ENCODE measurements at regions of chr20 and their contacts with region 1.

Region 1: DNA sequence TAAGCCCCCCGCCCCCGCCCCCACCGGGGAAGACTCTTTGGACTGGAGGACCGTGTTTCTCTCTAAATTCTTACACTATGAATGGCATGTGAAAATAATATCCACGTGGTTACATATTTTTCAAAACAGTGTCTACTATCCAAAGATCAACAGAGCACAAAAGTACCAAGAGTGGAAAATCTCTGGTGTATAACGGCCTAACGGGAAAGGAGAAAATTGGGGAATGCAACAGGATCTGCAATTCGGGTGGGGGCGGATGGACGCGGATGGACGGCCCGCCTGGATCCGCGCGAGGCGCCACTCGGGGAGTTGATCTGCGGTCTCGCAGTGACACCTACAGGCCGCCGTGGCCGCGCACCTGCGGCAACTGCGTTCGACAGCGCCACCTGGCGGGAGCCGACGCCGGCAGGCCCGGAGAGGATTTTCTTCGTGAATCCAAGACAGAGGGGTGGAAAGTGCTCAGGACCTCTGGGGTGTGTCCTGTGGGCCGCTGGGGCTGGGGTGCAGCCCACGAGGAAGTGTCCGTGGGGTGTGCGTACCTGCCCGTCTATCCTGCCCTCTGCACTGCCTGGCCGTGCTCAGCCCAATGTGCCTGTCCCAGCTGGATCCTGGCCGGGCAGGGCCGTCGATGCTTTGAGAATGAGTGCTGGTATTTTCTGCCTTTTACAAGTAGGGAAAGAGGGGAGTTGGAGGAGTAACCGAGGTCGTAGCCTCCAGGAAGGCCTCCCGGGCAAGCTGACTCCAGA is 18.6 kb downstream of the ANKRD60 start:
- DNase-seq: peak; percentile 72 to 98 (median 84)

Region 2: DNA sequence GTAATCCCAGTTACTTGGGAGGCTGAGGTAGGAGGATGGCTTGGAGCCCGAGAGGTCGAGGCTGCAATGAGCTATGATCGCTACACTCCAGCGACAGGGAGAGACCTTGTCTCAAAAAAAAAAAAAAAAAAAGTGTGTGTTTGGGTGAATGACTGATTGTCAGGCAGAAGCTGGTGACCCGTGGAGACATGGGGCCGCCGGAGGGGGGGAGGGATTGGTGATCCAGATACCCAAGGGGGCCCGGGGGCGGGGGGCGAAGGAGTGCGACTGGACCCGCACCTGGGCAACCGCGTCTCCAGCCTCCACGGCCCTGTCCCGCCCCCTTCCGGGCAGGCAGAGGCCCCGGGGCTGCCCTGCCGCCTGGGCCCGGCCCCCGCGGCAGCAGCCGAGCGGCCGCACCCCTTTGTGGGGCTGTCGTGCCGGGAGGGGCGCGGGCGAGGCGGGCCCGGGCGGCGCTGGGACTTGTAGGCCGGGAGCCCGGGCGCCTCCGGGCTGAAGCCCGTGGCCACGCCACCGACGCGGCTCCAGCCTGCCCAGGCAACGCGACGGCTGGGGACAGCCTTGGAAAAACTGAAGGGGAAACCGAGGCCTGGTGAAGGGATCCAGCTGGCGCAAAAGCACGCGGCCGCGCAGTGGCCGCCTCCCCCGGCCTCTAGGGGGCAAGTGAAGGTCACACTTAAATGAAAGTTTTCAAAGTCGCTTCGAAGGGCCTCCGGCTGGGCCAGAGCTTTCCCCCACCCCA is 820.7 kb before region 1 on chr20:
- intact Hi-C with region 1: loop called (anchors 10 kb)
- DNase-seq: peak in 7 of 10 donors; percentile 50 to 96 (median 76)

Region 3: DNA sequence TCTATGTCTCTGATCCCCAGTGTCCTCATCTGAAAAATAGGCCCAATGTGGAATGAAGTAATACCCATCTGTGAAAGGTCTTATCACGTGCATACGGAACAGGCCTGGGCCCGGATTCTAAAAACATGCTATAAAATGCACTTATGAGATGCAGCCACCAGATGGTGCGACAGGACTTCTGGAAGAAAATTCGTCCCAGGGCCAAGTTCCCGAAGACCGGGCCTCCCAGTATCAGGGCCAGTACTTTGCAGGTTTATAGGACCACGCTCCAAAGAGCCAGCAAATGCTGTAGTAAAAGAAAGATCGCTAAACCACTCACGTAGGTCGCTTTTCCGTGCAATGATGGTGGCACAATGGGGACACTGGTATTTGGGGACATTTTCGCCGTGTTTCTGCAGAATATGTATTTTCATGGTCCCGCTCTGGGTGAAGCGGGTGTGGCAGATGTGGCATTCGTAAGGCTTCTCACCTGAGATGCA is 695.5 kb before region 1 on chr20:
- intact Hi-C with region 1: loop called (anchors 1 kb)
- DNase-seq: peak in 9 of 10 donors; percentile 41 to 93 (median 68)

Region 4: DNA sequence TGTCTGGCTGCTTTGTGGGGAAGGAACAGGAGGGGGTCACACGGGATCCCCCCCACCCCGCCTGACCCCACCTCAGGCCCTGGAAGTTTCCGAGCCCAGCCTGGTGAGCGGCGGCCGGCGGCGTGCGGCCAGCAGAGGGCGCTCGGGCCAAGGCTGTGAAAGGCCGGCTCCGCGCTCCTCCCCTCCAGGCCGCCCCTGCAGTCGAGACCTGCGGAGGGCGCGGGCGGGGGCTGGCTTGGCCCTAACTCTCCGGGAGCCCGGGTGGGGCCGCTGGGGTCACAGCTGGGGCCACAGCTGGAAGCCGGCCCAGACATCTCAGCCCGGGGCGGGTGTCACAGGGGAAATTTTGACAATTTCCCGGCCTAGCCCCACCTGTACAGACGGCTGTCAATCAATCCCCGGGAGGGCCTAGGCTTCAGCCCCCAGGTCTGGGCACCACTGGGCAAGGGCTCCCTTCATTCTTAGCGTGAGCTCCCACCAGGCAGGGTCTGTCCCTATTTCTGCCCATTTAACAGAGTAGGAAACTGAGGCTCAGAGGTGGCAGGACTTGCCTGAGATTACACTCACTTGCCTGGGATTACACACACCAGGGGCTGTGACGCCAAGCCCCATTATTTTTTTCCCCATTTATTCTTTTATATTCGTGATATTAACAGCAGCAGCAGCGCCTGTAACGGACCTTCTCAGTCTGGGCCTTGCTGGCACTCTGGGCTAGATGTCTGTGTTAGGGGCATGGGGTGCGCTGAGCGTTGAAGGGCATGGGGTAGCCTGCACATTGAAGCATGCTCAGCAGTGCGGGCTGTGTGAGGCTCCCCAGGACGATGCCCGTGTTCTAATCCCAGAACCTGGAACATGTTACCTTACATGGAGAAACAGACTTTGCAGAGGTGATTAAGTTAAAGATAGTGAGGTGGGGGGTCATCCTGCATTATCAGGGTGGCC is 612.6 kb before region 1 on chr20:
- intact Hi-C with region 1: loop called (anchors 1 kb)
- DNase-seq: peak; percentile 27 to 95 (median 68)

Region 5: GRCh38 chr20:57879779-57880570 is 329.9 kb before region 1 on chr20:
- intact Hi-C with region 1: no loop called
- DNase-seq: no peak

Region 6: DNA sequence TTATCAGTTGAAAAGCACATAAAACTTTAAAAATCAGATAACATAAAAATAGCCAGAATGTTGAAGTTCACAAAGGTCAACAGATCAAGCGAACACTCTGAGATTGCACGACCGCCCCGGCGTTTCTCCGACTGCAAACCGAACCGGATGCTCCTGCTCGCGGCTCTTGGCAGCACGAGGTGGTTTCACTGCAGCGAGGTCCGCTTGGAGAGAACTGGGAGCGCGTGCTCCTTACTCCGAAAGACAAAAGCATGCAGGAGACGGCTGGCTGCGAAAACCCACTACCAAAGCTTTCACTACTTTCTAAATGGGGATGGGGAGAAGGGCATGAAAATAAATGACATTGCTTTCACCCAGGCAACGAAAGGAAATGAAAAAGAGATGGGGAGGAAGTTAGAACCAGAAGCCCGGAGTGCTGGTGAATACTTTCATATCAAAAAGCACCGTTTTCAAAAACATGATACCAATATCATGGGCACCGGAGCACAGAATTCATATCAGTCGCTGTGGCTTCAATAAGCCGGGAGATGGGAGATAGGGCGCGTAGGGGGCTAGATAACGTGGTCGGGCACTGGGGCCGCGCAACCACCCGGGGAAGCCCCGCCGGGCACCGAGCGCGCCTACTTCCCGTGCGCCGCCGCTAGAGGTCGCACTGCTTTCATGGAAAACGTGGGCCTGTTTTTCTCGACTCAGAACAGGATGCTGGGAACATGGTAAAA is 26.9 kb after region 1 on chr20:
- intact Hi-C with region 1: no loop called
- DNase-seq: peak; percentile 53 to 96 (median 83)

Region 7: DNA sequence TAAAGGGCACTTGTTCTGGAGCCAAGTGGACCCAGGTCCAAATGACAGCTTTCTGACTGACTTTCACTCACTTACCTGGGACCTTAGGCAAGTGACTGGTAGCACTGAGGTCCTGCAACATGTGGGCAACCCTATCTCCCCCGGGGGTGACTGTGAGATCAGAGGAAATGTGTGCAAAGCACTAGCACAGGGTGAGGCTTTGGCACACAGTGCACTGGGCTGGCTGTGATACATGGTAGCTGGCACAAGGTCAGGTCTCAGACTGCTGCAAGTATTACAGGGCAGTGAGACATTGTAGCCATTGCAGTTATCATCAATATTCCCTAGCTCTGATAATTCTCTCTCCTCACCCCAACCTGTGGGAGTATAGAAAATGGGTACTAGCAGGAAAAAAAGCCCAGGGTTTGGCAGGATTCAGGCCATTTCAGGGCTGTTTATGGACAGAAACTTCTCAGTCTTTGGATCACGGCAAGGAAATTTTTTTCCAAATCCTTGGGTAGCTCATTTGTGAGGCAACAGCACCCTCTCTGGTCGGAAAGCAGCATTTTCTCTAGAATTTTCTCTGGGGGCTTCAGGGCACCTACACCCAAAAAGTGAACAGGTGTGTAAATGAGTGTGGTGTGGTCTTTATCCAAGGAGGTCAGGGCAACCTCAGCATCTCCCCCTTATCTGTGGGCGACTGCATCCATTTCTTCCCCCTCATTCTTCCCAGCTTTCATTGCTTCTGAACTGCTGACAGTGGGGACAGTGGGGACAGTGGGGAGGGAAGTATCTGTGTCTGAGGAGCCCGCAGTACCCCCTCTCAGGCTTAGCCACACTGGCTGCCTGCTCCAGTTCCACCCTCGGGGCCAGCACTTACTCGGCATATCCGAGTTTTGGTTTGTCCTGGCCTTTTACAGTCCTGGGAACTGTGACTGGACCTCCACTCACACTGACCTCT is 1245.8 kb after region 1 on chr20:
- intact Hi-C with region 1: loop called (anchors 5 kb)
- DNase-seq: peak in 4 of 10 donors; percentile 14 to 62 (median 14)